GM12878 (cell line): ENCODE measurements at regions of chr11 and their contacts with region 1.

Region 1: GRCh38 chr11:66466225-66467027 is at the start of gene PELI3:
- DNase-seq: peak; percentile 71
- ATAC-seq: peak; percentile 96
- H3K4me3 ChIP-seq: peak within 1 kb of the TSS; percentile 81
- H3K27ac ChIP-seq: no peak within 1 kb of the TSS; the same call in 1 of the 2 replicates
- H3K4me1 ChIP-seq: peaks cover 14% of the 10 kb centered on the region
- H3K27me3 ChIP-seq: no peaks in the 10 kb centered on the region
- CTCF ChIP-seq: no peak
- EP300 ChIP-seq: no peak
- POLR2A ChIP-seq: no peak; the same call in 1 of the 2 replicates
- RAD21 ChIP-seq: no peak
- polyA plus RNA-seq, gene PELI3: 0.14 to 0.20 TPM

Region 2: GRCh38 chr11:65563601-65564000 is 902.8 kb before region 1 on chr11:
- CTCF ChIA-PET with region 1: no interaction called
- POLR2A ChIA-PET with region 1: interaction called, 12 read pairs
- RAD21 ChIA-PET with region 1: no interaction called
- SMC1A ChIA-PET with region 1: no interaction called
- in situ Hi-C with region 1: no loop called
- intact Hi-C with region 1: no loop called
- DNase-seq: no peak
- ATAC-seq: no peak
- H3K4me3 ChIP-seq: no peak overlapping the region
- H3K27ac ChIP-seq: no peak overlapping the region
- H3K4me1 ChIP-seq: peaks cover 9% of the 10 kb centered on the region
- H3K27me3 ChIP-seq: no peaks in the 10 kb centered on the region; a peak in 2 of 4 replicates
- CTCF ChIP-seq: no peak
- EP300 ChIP-seq: no peak
- POLR2A ChIP-seq: no peak
- RAD21 ChIP-seq: no peak

Region 3: GRCh38 chr11:66438504-66439466 is 27.6 kb before region 1 on chr11 and contains the start of gene MRPL11:
- CTCF ChIA-PET with region 1: interaction called, 46 read pairs
- POLR2A ChIA-PET with region 1: interaction called, 5 read pairs
- RAD21 ChIA-PET with region 1: interaction called, 19 read pairs
- SMC1A ChIA-PET with region 1: interaction called, 5 read pairs
- in situ Hi-C with region 1: no loop called
- intact Hi-C with region 1: no loop called
- DNase-seq: peak; percentile 95
- ATAC-seq: peak; percentile 99
- H3K4me3 ChIP-seq: peak within 1 kb of the TSS; percentile 98
- H3K27ac ChIP-seq: peak within 1 kb of the TSS; percentile 85
- H3K4me1 ChIP-seq: no peaks in the 10 kb centered on the region
- H3K27me3 ChIP-seq: no peaks in the 10 kb centered on the region; a peak in 1 of 4 replicates
- CTCF ChIP-seq: peak; percentile 66 to 91 (median 87)
- EP300 ChIP-seq: no peak
- POLR2A ChIP-seq: peak; percentile 82
- RAD21 ChIP-seq: peak; percentile 37; the same call in 1 of the 2 replicates
- polyA plus RNA-seq, gene MRPL11: 43.5 to 80.9 TPM

Region 4: DNA sequence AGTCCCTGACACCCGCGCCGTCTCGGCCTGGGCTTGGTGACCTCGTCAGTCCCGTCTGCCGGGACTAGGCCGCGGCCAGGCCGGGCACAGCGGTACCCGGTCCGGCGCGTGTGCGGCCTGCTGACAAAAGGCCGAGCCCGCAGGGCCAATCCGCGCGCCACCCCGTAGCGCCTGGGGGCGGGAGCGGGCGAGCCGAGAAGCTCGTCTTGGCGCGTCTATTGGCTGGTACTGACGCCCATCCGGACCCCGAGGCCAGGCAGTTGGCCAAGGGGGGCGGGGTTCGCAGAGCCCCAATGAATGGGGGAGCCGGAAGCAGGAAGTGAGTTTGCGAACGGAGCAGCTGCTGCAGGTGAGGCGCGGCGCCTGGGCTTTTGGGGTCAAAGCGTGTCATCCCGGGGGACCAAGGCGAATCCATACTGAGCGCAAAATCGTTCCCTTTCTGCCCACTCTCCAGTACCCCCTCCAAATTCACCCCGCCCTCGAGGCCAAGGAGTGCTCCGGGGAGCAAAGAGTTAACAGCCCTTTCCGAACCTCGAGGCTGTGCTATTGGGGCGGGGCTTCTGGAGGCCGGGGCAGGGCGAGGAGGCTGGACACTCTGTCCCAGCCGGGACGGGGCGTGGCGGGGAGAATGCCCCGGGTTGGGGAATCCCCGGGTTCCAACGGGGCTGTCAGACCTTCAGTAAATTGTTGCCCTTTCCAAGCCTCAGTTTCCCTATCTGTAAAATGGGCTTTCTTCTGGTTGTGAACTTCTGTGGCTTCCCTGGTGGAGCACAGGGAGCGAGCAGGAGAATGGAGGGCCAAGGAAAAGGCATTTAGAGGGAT is 13.9 kb after region 1 on chr11 and contains the start of gene DPP3:
- CTCF ChIA-PET with region 1: interaction called, 26 read pairs
- POLR2A ChIA-PET with region 1: interaction called, 7 read pairs
- RAD21 ChIA-PET with region 1: interaction called, 16 read pairs
- SMC1A ChIA-PET with region 1: interaction called, 3 read pairs
- in situ Hi-C with region 1: no loop called
- intact Hi-C with region 1: no loop called
- DNase-seq: peak; percentile 84
- ATAC-seq: peak; percentile 98
- H3K4me3 ChIP-seq: peak within 1 kb of the TSS; percentile 95
- H3K27ac ChIP-seq: peak within 1 kb of the TSS; percentile 89
- H3K4me1 ChIP-seq: peaks cover 6% of the 10 kb centered on the region
- H3K27me3 ChIP-seq: no peaks in the 10 kb centered on the region
- CTCF ChIP-seq: no peak
- EP300 ChIP-seq: peak in 1 of 2 experiments; percentile 40; a peak in 1 of 4 replicates
- POLR2A ChIP-seq: peak; percentile 94
- RAD21 ChIP-seq: no peak
- polyA plus RNA-seq, gene DPP3: 6.0 to 6.3 TPM

Region 5: DNA sequence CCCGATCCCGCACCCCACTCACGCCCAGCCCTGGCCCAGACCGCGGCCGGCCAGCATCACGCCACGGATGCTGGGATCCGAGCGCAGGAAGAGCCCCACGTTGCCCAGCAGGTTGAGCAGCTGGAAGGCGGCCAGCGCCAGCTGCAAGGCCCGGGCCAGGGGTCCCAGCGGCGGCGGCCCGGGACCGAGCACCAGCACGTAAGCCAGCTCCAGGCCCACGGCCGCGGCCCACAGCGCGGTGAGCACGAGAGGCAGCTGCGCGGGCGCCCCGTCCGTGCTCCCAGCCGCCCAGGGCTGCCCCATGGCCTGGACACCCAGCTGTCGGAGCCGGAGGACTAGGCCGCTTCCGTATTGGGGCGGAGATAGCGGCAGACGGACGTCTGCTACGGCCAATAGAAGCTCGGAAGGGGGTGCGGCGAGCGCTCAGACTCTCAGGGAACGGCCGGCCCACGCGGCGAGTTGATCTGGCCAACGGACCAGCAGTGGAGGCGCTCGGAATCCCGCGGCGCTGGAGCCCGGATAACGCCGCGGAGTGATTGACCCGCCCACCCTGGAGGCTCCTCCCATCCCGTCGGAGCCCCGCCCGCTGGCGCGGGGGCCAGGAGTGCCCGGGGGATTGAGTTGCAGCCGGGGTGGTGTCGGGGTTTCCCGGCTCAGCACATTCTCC is 79.4 kb after region 1 on chr11 and contains the start of gene ZDHHC24:
- CTCF ChIA-PET with region 1: no interaction called
- POLR2A ChIA-PET with region 1: interaction called, 13 read pairs
- RAD21 ChIA-PET with region 1: interaction called, 6 read pairs
- SMC1A ChIA-PET with region 1: no interaction called
- in situ Hi-C with region 1: no loop called
- intact Hi-C with region 1: no loop called
- DNase-seq: peak; percentile 81
- ATAC-seq: peak; percentile 91
- H3K4me3 ChIP-seq: peak within 1 kb of the TSS; percentile 86
- H3K27ac ChIP-seq: peak within 1 kb of the TSS; percentile 72
- H3K4me1 ChIP-seq: peaks cover 10% of the 10 kb centered on the region
- H3K27me3 ChIP-seq: no peaks in the 10 kb centered on the region
- CTCF ChIP-seq: no peak
- EP300 ChIP-seq: no peak
- POLR2A ChIP-seq: peak; percentile 94
- RAD21 ChIP-seq: no peak
- polyA plus RNA-seq, gene ZDHHC24: 0.86 to 0.89 TPM